Body of pancreas (tissue), 4 donors: ENCODE measurements at regions of chr19 and their contacts with region 1.

Region 1: DNA sequence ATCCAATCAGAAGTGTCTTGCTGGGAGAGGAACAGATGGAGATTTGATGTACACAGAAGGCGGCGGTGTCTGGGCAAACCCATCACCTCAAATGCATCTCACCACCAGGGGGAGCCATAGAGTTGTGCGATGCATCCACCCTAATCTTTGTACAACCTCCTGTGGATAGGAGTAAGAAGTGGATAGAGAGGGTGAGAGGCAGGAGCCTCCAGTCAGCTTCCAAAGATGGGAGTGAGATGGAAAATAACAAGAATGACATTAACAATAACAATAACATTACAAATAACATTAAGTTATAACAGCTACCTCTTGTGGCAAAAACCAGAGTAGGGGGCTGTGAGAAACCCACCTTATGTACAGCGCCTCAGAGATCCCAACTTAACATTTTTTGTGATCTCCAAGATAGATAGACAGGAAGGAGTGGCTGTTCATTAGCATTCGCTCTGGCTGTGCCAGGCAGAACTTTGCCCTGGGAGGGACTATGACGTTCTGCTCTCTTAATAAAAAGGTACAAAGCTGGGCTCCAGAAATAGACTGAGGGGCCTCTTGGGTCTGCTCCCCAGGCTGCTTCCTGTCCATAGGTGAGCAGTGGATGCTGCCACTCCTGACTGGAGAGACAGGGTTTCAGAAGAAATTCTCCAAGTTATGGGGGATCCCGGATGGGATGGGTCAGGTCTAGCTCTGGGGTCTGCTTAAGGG is 5.2 kb upstream of the CEACAM18 start:
- DNase-seq: peak; percentile 74 to 83 (median 78)
- ATAC-seq: peak; percentile 53
- H3K4me3 ChIP-seq: no peak overlapping the region
- H3K27ac ChIP-seq: no peak overlapping the region
- H3K4me1 ChIP-seq: no peaks in the 10 kb centered on the region
- H3K27me3 ChIP-seq: no peaks in the 10 kb centered on the region
- CTCF ChIP-seq: peak; percentile 68 to 91 (median 72)
- POLR2A ChIP-seq: no peak

Region 2: DNA sequence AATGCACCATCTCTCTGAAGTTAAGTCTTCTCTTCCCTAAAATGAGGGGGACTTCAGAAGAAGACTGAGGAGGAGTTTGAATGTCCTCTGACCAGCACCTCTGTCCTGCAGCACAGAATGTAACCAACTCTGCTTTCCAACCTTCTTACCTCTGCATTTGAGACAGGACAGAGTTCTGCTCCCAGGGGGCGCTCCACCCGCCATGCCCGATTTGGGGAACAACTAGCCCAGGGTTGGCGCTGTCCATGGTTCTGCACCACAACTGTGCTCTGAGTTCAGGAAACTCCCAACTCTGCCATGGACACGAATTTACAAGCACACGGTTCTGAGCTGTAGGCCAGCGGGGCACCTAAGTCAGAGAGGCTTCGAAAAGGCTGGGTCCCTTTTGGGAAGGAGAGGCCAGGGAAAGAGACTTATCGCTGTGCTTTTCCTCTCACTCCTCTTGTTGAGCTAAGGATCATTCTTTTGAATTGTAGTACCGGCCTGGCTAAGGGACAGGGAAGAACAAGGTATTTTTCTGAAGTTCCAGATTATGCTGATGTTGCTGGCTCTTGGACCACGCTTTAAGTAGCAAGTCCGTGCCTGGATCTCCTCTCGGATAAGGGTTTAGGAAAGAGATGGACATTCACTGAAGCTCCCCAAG is 134.9 kb after region 1 on chr19:
- intact Hi-C with region 1: no loop called
- DNase-seq: peak; percentile 54 to 71 (median 62)
- ATAC-seq: no peak
- H3K4me3 ChIP-seq: no peak overlapping the region
- H3K27ac ChIP-seq: no peak overlapping the region
- H3K4me1 ChIP-seq: no peaks in the 10 kb centered on the region
- H3K27me3 ChIP-seq: no peaks in the 10 kb centered on the region
- CTCF ChIP-seq: peak in 5 of 7 experiments; percentile 30 to 55 (median 34)
- POLR2A ChIP-seq: no peak

Region 3: GRCh38 chr19:51651216-51651846 is 178.2 kb after region 1 on chr19:
- intact Hi-C with region 1: loop called (anchors 10 kb)
- DNase-seq: peak in 1 of 4 donors; percentile 49
- ATAC-seq: no peak
- H3K4me3 ChIP-seq: no peak overlapping the region
- H3K27ac ChIP-seq: no peak overlapping the region
- H3K4me1 ChIP-seq: no peaks in the 10 kb centered on the region
- H3K27me3 ChIP-seq: no peaks in the 10 kb centered on the region
- CTCF ChIP-seq: no peak
- POLR2A ChIP-seq: no peak